ENCODE measurements at regions of chr14 and their contacts with region 1.

Region 1: GRCh38 chr14:90924621-90925345 is 108.6 kb upstream of the TTC7B start:
- DNase-seq: no peak
- ATAC-seq: no peak
- H3K4me3 ChIP-seq: no peak overlapping the region
- H3K27ac ChIP-seq: no peak overlapping the region
- H3K4me1 ChIP-seq: no peaks in the 10 kb centered on the region
- H3K27me3 ChIP-seq: no peaks in the 10 kb centered on the region
- CTCF ChIP-seq: no peak

Region 2: GRCh38 chr14:90874599-90874998 is 50.2 kb before region 1 on chr14:
- intact Hi-C with region 1: no loop called
- DNase-seq: no peak
- ATAC-seq: no peak
- H3K4me3 ChIP-seq: no peak overlapping the region
- H3K27ac ChIP-seq: no peak overlapping the region
- H3K4me1 ChIP-seq: peaks cover 12% of the 10 kb centered on the region
- H3K27me3 ChIP-seq: no peaks in the 10 kb centered on the region
- CTCF ChIP-seq: no peak

Region 3: DNA sequence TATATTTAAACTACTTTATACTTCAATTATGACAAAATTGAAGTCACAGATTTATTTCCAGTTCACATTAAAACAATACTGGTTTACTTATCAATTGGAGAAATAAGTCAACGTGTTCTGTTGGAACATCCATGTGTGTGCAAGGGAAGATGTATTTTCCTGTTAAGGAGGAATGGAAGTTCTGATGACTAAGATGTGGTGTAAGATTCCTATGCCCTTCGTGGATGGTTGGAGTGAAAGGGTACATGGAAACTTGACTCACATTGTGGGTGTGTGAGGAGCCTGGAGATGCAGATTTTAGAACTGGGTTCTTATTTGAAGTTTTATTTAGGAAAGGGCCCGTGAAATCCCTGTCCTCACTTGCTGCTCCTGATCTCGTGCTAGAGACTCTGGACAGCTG is 711.8 kb after region 1 on chr14:
- intact Hi-C with region 1: no loop called
- DNase-seq: no peak
- ATAC-seq: no peak
- H3K4me3 ChIP-seq: no peak overlapping the region
- H3K27ac ChIP-seq: no peak overlapping the region
- H3K4me1 ChIP-seq: no peaks in the 10 kb centered on the region
- H3K27me3 ChIP-seq: no peaks in the 10 kb centered on the region
- CTCF ChIP-seq: no peak

Region 4: DNA sequence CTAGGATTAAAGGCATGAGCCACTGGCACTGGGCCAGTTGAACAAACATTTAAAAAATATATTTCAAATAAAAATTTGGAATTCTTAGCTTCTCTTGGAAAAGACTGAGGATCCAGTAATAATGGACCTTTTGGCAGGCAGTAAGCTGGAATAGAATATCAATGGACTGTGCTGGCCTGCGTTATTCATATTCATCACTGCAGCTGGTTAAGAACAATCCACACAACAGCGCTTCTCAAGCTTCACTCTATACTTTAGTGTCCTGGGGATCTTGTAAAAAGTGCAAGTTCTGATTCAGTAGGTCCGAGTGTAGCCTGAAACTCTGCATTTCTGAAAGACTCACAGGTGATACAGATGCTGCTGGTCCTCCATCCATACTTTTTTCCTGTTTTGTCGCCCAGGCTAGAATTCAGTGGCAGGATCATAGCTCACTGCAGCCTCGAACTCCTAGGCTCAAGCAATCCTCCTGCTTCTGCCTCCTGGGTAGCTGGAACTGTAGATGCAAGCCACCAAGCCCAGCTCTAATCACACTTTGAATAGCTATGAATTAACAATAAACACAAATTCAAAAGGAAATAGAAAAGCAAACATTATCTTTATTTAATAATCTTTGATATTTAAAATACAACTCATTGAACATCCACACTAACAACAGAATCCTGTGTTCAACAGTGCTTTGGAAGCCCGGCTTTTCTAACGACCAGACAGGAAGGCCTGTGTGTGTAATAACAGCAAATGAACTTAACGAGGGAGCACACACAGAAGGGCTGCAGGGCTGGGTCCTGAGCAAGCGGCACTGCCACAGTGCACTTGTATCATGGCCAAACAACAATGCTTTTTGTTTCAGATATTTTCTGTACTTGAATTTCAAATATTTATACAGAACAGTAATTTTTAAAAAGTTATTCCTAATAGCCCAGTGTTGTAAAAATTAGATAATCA is 1133.5 kb after region 1 on chr14:
- intact Hi-C with region 1: loop called in 1 of 2 experiments (anchors 10 kb)
- DNase-seq: no peak
- ATAC-seq: no peak
- H3K4me3 ChIP-seq: no peak overlapping the region
- H3K27ac ChIP-seq: no peak overlapping the region
- H3K4me1 ChIP-seq: no peaks in the 10 kb centered on the region
- H3K27me3 ChIP-seq: no peaks in the 10 kb centered on the region
- CTCF ChIP-seq: no peak

Measured in psoas muscle (tissue), 8 donors.